ENCODE measurements at regions of chr9 and their contacts with region 1.

Region 1: DNA sequence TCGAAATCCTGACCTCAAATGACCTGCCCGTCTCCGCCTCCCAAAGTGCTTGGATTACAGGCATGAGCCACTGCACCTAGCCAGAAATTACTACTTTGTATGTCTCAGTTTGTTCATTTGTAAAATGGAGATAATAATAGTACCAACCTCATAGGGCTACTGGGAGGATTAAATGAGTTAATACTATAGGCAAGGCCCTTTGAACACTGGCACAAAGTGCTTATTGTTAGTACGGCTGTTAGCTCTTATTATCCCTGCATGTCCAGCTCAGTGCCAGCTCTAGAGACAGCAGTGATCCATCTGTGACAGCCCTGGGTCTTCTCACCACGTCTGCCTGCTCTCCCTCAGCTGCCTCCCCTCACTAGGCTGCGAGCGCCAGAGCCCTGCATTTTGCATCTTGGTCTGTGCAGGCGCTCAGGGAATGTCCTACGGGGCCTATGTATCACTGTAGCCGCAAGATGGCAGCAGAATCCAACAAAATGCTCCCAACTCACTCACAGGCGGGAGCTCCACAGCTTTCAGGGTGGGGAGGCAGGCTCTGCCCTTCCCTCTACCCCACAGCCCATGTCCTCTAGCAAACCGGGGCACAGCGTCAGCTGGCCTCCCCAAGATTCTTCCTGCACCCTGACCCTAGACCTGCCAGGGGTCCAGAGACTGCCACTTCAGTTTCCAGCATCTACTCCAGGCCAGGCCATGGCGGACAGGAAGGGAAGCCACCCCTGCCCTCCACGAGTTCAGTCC is 17.7 kb upstream of the AKNA start:
- DNase-seq: peak; percentile 82
- ATAC-seq: peak; percentile 93
- H3K4me3 Mint-ChIP-seq: no peak overlapping the region
- H3K27ac Mint-ChIP-seq: no peak overlapping the region
- H3K4me1 Mint-ChIP-seq: peaks cover 19% of the 10 kb centered on the region
- H3K27me3 Mint-ChIP-seq: no peaks in the 10 kb centered on the region
- CTCF ChIP-seq: peak; percentile 66

Region 2: GRCh38 chr9:114092336-114092735 is 313.1 kb before region 1 on chr9:
- CTCF ChIA-PET with region 1: no interaction called
- POLR2A ChIA-PET with region 1: no interaction called
- DNase-seq: no peak
- ATAC-seq: no peak
- H3K4me3 Mint-ChIP-seq: no peak overlapping the region
- H3K27ac Mint-ChIP-seq: no peak overlapping the region
- H3K4me1 Mint-ChIP-seq: 0 out of 2 replicates have a peak, but pooled peaks cover under 1% of the 10 kb centered on the region
- H3K27me3 Mint-ChIP-seq: peaks cover 31% of the 10 kb centered on the region
- CTCF ChIP-seq: no peak

Region 3: GRCh38 chr9:114339130-114339908 is 66.1 kb before region 1 on chr9:
- CTCF ChIA-PET with region 1: interaction called, 16 read pairs
- POLR2A ChIA-PET with region 1: no interaction called
- DNase-seq: peak; percentile 70
- ATAC-seq: peak; percentile 89
- H3K4me3 Mint-ChIP-seq: no peak overlapping the region
- H3K27ac Mint-ChIP-seq: no peak overlapping the region
- H3K4me1 Mint-ChIP-seq: no peaks in the 10 kb centered on the region
- H3K27me3 Mint-ChIP-seq: no peaks in the 10 kb centered on the region
- CTCF ChIP-seq: peak; percentile 86

Region 4: DNA sequence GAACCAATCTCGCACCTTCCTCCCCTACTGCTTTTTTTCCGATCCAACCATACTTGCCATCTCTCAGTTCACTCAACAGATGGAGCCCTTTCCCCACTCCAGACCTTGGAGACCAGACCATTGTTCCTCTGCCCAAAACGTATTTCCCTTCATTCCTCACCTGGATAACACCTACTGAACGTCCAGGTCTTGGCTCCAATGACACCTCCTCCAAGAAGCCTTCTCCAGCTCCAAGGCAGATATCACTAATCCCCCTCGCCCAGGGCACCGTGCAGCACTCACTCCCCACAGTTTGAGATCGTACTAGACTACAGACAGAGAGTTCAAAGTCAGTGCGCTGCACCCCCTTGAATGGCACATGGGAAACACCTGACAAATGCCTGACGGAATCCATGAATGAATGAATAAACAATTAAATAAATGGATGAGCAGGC is 29.4 kb after region 1 on chr9:
- CTCF ChIA-PET with region 1: interaction called, 35 read pairs
- POLR2A ChIA-PET with region 1: no interaction called
- DNase-seq: peak; percentile 49
- ATAC-seq: peak; percentile 97
- H3K4me3 Mint-ChIP-seq: no peak overlapping the region
- H3K27ac Mint-ChIP-seq: no peak overlapping the region
- H3K4me1 Mint-ChIP-seq: peaks cover 3% of the 10 kb centered on the region; the same call in 1 of the 2 replicates
- H3K27me3 Mint-ChIP-seq: no peaks in the 10 kb centered on the region
- CTCF ChIP-seq: peak; percentile 25; the same call in 1 of the 2 replicates

Region 5: DNA sequence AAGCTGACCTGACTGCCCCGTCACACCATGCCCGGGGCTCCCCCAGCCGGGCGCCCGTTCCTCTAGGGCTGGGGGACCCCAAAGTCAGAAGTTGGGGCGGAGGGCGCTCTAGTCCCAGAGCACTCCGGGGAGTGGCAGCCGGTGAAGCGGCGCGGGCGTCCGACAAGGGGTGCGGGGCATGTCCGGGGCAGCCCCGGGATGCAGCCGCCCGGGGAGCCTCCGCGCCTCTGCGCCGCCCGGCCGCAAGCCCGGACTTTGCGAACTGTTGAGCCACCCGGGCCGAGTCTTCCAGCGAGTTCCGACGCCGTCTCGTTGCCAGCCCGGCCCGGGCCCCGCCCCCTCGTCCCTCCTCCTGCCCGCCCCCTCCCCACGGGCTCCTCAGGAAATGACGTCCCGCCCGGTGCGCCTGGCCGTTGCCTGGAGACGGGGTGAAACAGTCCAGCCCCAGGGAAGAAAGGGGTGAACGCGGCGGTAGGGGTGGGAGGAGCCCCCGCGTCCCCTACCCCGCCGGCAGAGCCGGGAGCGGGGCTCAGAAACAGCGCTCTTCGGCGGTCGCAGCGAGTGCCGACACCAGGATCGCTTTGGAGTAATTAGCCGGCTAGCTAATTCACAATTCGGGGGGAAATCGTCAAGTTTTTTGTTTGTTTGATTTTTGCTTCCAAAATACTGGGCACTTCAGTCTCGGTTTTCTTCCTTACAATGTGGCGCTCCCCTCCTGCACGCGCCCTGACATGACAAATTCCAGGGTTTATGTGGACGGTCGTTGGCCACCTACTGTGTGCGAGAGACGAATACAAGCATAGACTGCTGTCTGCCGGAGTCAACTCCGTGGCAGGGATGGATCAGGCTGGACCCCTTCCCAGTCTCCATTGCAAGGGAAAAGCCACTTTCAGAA is 100.0 kb after region 1 on chr9 and contains the start of gene WHRN:
- CTCF ChIA-PET with region 1: interaction called, 22 read pairs
- POLR2A ChIA-PET with region 1: no interaction called
- DNase-seq: peak; percentile 95
- ATAC-seq: peak; percentile 78
- H3K4me3 Mint-ChIP-seq: peak within 1 kb of the TSS; percentile 82
- H3K27ac Mint-ChIP-seq: peak within 1 kb of the TSS; percentile 18; the same call in 1 of the 2 replicates
- H3K4me1 Mint-ChIP-seq: peaks cover 61% of the 10 kb centered on the region
- H3K27me3 Mint-ChIP-seq: peaks cover 17% of the 10 kb centered on the region
- CTCF ChIP-seq: no peak
- total RNA-seq, gene WHRN: 20.6 to 24.3 TPM (median 23.3 TPM) in 3 replicates

Region 6: DNA sequence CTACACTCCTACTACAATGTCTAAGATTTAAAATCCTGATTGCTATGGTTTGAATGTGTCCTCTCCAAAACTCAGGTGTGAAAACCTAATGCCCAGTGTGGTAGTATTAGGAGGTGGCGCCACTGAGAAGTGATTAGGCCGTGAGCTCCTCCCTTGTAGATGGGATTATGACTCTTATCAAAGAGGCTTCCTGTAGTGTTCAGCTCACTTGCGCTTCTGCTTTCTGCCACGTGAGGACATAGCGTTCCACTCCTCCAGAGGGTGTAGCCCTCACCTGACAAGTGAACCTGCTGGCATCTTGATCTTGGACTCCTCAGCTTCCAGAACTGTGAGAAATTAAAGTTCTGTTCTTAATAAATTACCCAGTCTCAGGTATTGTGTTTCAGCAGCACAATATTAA is 132.8 kb after region 1 on chr9:
- CTCF ChIA-PET with region 1: interaction called, 17 read pairs
- POLR2A ChIA-PET with region 1: no interaction called
- DNase-seq: peak; percentile 46
- ATAC-seq: peak; percentile 100
- H3K4me3 Mint-ChIP-seq: no peak overlapping the region
- H3K27ac Mint-ChIP-seq: 0 out of 2 replicates have a peak overlapping the region, but pooled peaks have one; percentile 15
- H3K4me1 Mint-ChIP-seq: peaks cover 9% of the 10 kb centered on the region
- H3K27me3 Mint-ChIP-seq: no peaks in the 10 kb centered on the region
- CTCF ChIP-seq: no peak

Region 7: DNA sequence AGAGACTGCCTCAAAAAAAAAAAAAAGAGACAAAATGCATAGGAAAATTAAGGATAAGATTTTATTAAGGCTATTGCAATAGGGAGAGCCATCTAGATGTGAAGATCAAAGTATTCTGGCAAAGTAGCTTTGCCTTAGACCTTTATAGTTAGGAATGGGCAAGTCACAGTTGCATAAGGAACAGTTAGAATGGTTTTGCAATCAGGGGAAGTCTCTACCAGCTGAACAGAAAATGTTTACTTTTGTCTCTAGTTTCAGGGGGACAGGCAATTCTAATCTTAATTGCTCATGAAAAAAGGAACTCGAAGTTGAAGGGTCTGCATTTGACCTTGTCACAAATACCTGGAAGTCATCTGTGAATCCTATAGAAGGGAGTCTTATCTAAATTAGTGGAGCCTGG is 169.0 kb after region 1 on chr9:
- CTCF ChIA-PET with region 1: no interaction called
- POLR2A ChIA-PET with region 1: no interaction called
- DNase-seq: no peak
- ATAC-seq: no peak
- H3K4me3 Mint-ChIP-seq: no peak overlapping the region
- H3K27ac Mint-ChIP-seq: no peak overlapping the region
- H3K4me1 Mint-ChIP-seq: peaks cover 10% of the 10 kb centered on the region; the same call in 1 of the 2 replicates
- H3K27me3 Mint-ChIP-seq: no peaks in the 10 kb centered on the region; the same call in 1 of the 2 replicates
- CTCF ChIP-seq: no peak

Region 8: GRCh38 chr9:114674798-114675540 is 269.5 kb after region 1 on chr9:
- CTCF ChIA-PET with region 1: interaction called, 10 read pairs
- POLR2A ChIA-PET with region 1: no interaction called
- DNase-seq: no peak
- ATAC-seq: peak; percentile 60
- H3K4me3 Mint-ChIP-seq: no peak overlapping the region
- H3K27ac Mint-ChIP-seq: no peak overlapping the region
- H3K4me1 Mint-ChIP-seq: peaks cover 6% of the 10 kb centered on the region; the same call in 1 of the 2 replicates
- H3K27me3 Mint-ChIP-seq: peaks cover 20% of the 10 kb centered on the region
- CTCF ChIP-seq: no peak